ENCODE measurements at regions of chr6 and their contacts with region 1.

Region 1: DNA sequence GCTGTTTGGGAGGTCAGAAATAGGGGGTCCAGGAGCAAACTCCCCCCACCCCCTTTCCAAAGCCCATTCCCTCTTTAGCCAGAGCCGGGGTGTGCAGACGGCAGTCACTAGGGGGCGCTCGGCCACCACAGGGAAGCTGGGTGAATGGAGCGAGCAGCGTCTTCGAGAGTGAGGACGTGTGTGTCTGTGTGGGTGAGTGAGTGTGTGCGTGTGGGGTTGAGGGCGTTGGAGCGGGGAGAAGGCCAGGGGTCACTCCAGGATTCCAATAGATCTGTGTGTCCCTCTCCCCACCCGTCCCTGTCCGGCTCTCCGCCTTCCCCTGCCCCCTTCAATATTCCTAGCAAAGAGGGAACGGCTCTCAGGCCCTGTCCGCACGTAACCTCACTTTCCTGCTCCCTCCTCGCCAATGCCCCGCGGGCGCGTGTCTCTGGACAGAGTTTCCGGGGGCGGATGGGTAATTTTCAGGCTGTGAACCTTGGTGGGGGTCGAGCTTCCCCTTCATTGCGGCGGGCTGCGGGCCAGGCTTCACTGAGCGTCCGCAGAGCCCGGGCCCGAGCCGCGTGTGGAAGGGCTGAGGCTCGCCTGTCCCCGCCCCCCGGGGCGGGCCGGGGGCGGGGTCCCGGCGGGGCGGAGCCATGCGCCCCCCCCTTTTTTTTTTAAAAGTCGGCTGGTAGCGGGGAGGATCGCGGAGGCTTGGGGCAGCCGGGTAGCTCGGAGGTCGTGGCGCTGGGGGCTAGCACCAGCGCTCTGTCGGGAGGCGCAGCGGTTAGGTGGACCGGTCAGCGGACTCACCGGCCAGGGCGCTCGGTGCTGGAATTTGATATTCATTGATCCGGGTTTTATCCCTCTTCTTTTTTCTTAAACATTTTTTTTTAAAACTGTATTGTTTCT is at the start of gene VEGFA:
- DNase-seq: peak; percentile 91
- H3K4me3 Mint-ChIP-seq: peak within 1 kb of the TSS; percentile 88
- H3K27ac Mint-ChIP-seq: peak within 1 kb of the TSS; percentile 86
- H3K4me1 Mint-ChIP-seq: peaks cover 31% of the 10 kb centered on the region
- H3K27me3 Mint-ChIP-seq: peaks cover 5% of the 10 kb centered on the region
- total RNA-seq, gene VEGFA: 23.7 to 25.8 TPM

Region 2: DNA sequence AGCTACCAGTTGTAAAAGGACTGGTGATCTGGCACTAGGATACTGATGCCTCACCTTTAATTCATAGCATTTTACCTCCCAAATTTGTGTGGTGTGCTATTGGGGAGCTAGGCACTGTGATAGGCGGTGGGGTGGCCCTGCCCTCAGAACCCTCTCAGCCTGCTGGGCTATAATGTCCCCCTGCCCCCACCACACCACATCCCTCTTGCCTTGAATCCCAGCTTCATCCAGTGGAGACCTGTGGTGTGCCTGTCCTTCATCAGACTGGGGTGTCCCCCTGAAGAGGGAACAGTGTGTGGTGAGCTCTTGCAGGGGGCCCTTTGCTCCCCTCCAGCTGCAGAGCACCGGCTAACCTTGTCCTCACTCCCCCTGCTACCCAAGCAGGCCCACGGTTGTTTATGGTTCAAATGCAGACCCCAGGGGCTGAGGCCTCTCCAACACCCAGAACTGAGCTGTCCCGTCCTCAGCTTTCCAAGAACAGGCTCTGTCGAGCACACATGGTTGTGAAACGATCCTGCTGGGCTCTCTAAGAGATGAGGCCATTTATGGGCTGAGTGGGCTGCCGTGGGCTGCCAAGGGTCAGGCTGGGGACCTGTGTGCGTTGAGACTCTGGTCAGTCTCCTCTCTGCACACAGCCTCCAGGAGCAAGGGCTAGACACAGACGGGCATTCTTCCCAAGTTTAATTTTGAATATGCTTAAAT is 26.7 kb before region 1 on chr6:
- CTCF ChIA-PET with region 1: interaction called, 12 read pairs
- POLR2A ChIA-PET with region 1: no interaction called
- DNase-seq: no peak
- H3K4me3 Mint-ChIP-seq: no peak overlapping the region
- H3K27ac Mint-ChIP-seq: no peak overlapping the region
- H3K4me1 Mint-ChIP-seq: no peaks in the 10 kb centered on the region
- H3K27me3 Mint-ChIP-seq: peaks cover 14% of the 10 kb centered on the region

Region 3: DNA sequence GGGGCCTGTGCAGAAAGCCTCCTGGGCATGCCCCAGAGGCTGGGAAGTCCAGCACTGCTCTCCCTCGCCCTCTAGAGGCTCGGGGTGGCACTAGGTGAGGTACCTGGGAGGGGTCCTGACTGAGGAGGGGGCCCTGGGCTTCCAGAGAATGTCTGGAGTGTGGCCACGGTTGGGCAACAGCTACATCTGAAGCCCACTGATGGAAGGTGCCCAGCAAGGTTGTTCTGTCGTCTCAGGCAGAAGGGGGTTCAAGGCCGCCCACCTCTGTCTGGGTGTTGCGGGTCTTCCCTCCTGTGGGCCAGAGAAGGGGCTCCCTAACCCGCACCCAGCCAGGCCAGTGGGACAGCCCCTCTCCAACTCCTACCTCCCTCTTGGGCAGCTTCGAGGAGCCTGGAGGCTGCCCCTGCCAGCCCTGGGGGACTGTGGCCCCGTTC is 11.1 kb before region 1 on chr6:
- CTCF ChIA-PET with region 1: interaction called, 24 read pairs
- POLR2A ChIA-PET with region 1: no interaction called
- DNase-seq: no peak
- H3K4me3 Mint-ChIP-seq: no peak overlapping the region
- H3K27ac Mint-ChIP-seq: no peak overlapping the region
- H3K4me1 Mint-ChIP-seq: no peaks in the 10 kb centered on the region
- H3K27me3 Mint-ChIP-seq: peaks cover 7% of the 10 kb centered on the region